Activated CD4-positive, alpha-beta memory T cell treated with anti-CD3 and anti-CD28 coated beads, Interleukin-2, amount 10 ng/mL, durations not matched to agents 7 days and 5 days (primary cell): ENCODE measurements at regions of chr3 and their contacts with region 1.

Region 1: GRCh38 chr3:182909318-182910040 is 70.9 kb downstream of the DCUN1D1 start:
- DNase-seq: no peak
- H3K4me3 Mint-ChIP-seq: no peak overlapping the region
- H3K27ac Mint-ChIP-seq: peak overlapping the region; percentile 41
- H3K4me1 Mint-ChIP-seq: peaks cover 48% of the 10 kb centered on the region
- H3K27me3 Mint-ChIP-seq: no peaks in the 10 kb centered on the region

Region 2: GRCh38 chr3:182967218-182968204 is 58.0 kb after region 1 on chr3:
- CTCF ChIA-PET with region 1: interaction called, 11 read pairs
- POLR2A ChIA-PET with region 1: no interaction called
- DNase-seq: peak; percentile 42
- H3K4me3 Mint-ChIP-seq: peak overlapping the region; percentile 31
- H3K27ac Mint-ChIP-seq: peak overlapping the region; percentile 77
- H3K4me1 Mint-ChIP-seq: peaks cover 60% of the 10 kb centered on the region
- H3K27me3 Mint-ChIP-seq: no peaks in the 10 kb centered on the region

Region 3: DNA sequence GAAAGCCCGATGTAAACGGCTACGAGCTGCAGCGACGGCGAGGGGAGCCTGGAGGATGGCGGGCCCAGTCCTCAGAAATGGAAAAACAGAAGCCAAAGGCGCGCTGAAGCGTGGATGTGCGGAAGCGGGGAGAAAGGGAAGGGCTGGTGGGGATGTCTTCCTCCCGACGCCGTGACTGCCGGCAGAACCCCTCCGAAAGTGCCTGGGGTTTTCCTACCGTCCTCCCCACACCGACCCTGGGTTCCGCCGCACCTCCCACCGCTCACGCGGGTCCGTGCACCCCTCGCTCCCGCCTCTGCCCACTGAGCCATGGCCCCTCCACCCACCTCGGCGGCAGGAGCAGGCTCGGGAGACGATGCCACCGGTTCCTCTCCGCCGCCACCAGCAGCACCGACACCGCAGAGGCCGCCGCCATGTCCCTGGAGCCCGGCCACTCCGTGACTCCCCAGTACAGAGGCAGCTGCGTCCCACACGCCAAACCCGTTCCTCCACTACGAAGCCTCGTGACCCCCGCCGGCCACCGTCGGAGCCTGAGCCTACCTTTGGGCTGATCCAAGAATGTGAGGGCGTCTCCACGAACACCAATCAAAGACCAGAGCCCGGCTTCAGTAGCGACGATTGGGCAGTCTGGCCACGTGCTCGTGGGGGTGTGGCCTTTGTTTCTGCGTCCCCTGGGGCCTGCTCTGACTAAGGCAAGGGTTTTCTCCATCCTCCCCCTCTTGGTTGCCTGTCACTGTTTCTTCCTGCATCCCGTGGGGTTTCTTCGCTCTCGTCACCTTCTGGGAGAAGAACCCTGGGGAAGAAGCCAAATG is 189.8 kb after region 1 on chr3 and contains the start of gene MCCC1:
- CTCF ChIA-PET with region 1: interaction called, 11 read pairs
- POLR2A ChIA-PET with region 1: interaction called, 4 read pairs
- DNase-seq: peak; percentile 98
- H3K4me3 Mint-ChIP-seq: peak within 1 kb of the TSS; percentile 96
- H3K27ac Mint-ChIP-seq: peak within 1 kb of the TSS; percentile 84
- H3K4me1 Mint-ChIP-seq: peaks cover 30% of the 10 kb centered on the region
- H3K27me3 Mint-ChIP-seq: no peaks in the 10 kb centered on the region
- total RNA-seq, gene MCCC1: 23.5 to 27.5 TPM

Region 4: DNA sequence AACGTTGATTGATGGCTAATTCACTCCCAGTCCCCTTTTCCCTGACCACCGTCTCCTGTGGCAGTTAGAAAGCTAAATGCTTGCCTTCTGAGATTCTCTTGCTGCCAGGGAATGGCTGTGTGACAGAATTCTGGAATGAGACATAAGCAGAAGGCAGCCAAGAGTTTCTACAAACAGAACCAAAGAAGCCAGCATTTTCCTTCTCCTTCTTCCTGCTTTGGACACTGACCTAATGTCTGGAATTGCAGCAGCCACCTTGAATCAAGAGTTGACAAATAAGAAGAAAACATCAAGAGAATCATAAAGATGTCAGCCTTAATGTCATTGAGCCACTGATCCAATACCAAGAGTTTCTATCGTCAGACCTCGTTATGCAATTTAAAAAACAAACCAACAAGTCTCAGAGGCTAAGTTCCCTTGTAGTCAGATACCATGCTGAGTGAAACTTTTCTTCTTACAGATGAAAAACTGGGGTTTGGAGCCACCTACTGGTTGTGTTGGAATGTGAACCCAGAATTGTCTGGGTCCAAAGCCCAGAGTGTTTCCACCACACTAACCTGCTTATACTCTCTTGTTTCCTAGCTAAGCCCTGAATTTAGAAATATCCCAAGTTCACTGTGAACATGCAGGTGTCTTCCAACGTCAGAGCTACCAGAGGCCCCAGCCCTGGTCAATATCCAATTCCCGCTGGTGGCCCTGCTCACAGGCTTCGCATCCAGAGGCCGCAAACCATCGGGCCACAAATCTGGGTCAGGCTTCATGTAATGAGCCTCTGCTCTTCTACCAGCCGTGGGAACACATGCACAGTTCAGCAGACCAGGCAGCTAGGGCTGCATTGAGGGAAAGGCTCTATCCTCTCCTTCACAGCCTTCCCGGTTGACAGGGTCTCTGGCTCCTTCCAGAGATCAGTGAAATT is 476.5 kb after region 1 on chr3:
- CTCF ChIA-PET with region 1: interaction called, 10 read pairs
- POLR2A ChIA-PET with region 1: no interaction called
- DNase-seq: peak; percentile 60
- H3K4me3 Mint-ChIP-seq: no peak overlapping the region
- H3K27ac Mint-ChIP-seq: no peak overlapping the region
- H3K4me1 Mint-ChIP-seq: peaks cover 3% of the 10 kb centered on the region
- H3K27me3 Mint-ChIP-seq: no peaks in the 10 kb centered on the region